GM12878 (cell line): ENCODE measurements at regions of chr11 and their contacts with region 1.

Region 1: GRCh38 chr11:94602430-94603372 is 35.5 kb downstream of the PIWIL4 start:
- DNase-seq: peak; percentile 75
- ATAC-seq: peak; percentile 94
- H3K4me3 ChIP-seq: no peak overlapping the region
- H3K27ac ChIP-seq: peak overlapping the region; percentile 44; the same call in 1 of the 2 replicates
- H3K4me1 ChIP-seq: peaks cover 7% of the 10 kb centered on the region; the same call in 1 of the 2 replicates
- H3K27me3 ChIP-seq: no peaks in the 10 kb centered on the region
- CTCF ChIP-seq: peak; percentile 58 to 66 (median 66)
- EP300 ChIP-seq: peak; percentile 80 to 95; a peak in 2 of 4 replicates
- POLR2A ChIP-seq: no peak
- RAD21 ChIP-seq: peak; percentile 65

Region 2: GRCh38 chr11:94271885-94272372 is 330.8 kb before region 1 on chr11:
- CTCF ChIA-PET with region 1: no interaction called
- POLR2A ChIA-PET with region 1: no interaction called
- RAD21 ChIA-PET with region 1: no interaction called
- SMC1A ChIA-PET with region 1: no interaction called
- in situ Hi-C with region 1: no loop called
- intact Hi-C with region 1: loop called (anchors 5 kb)
- DNase-seq: peak; percentile 24
- ATAC-seq: peak; percentile 90
- H3K4me3 ChIP-seq: no peak overlapping the region
- H3K27ac ChIP-seq: peak overlapping the region; percentile 55; the same call in 1 of the 2 replicates
- H3K4me1 ChIP-seq: peaks cover 6% of the 10 kb centered on the region; the same call in 1 of the 2 replicates
- H3K27me3 ChIP-seq: no peaks in the 10 kb centered on the region
- CTCF ChIP-seq: no peak
- EP300 ChIP-seq: peak; percentile 88 to 91; a peak in 3 of 4 replicates
- POLR2A ChIP-seq: no peak
- RAD21 ChIP-seq: peak; percentile 33; the same call in 1 of the 2 replicates

Region 3: GRCh38 chr11:94504689-94505293 is 97.9 kb before region 1 on chr11:
- CTCF ChIA-PET with region 1: interaction called, 32 read pairs
- POLR2A ChIA-PET with region 1: no interaction called
- RAD21 ChIA-PET with region 1: interaction called, 9 read pairs
- SMC1A ChIA-PET with region 1: interaction called, 17 read pairs
- in situ Hi-C with region 1: no loop called
- intact Hi-C with region 1: no loop called
- DNase-seq: no peak
- ATAC-seq: peak; percentile 84
- H3K4me3 ChIP-seq: no peak overlapping the region
- H3K27ac ChIP-seq: no peak overlapping the region
- H3K4me1 ChIP-seq: no peaks in the 10 kb centered on the region
- H3K27me3 ChIP-seq: no peaks in the 10 kb centered on the region
- CTCF ChIP-seq: peak; percentile 49 to 69 (median 55); a peak in 5 of 6 replicates
- EP300 ChIP-seq: no peak
- POLR2A ChIP-seq: no peak
- RAD21 ChIP-seq: peak; percentile 85

Region 4: GRCh38 chr11:94525546-94526324 is 77.0 kb before region 1 on chr11:
- CTCF ChIA-PET with region 1: interaction called, 337 read pairs
- POLR2A ChIA-PET with region 1: interaction called, 13 read pairs
- RAD21 ChIA-PET with region 1: interaction called, 121 read pairs
- SMC1A ChIA-PET with region 1: interaction called, 216 read pairs
- in situ Hi-C with region 1: loop called (anchors 5 kb)
- intact Hi-C with region 1: loop called (anchors 1 kb)
- DNase-seq: no peak
- ATAC-seq: no peak
- H3K4me3 ChIP-seq: no peak overlapping the region
- H3K27ac ChIP-seq: no peak overlapping the region
- H3K4me1 ChIP-seq: no peaks in the 10 kb centered on the region; the same call in 1 of the 2 replicates
- H3K27me3 ChIP-seq: no peaks in the 10 kb centered on the region
- CTCF ChIP-seq: no peak
- EP300 ChIP-seq: no peak
- POLR2A ChIP-seq: no peak
- RAD21 ChIP-seq: no peak

Region 5: DNA sequence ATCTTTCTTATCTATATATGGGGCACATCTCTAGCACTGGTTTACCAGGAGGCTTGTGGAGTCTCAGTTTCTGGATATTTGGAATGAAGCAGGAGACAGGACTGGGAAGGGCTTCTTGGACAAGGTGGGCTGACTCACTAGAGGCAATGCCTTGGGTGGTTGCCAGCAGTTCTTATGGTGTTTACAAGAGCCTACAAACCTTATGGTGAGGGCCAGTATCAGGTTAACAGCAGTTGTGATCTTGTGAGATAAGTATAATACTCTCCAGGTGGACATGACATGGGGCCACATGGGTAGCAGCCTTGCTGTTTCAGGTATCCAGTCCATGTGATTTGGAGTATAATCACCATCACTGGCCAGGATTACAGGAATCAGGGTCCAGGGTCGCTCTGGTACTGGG is 48.8 kb before region 1 on chr11:
- CTCF ChIA-PET with region 1: interaction called, 26 read pairs
- POLR2A ChIA-PET with region 1: interaction called, 5 read pairs
- RAD21 ChIA-PET with region 1: interaction called, 52 read pairs
- SMC1A ChIA-PET with region 1: interaction called, 53 read pairs
- in situ Hi-C with region 1: no loop called
- intact Hi-C with region 1: no loop called
- DNase-seq: no peak
- ATAC-seq: no peak
- H3K4me3 ChIP-seq: no peak overlapping the region
- H3K27ac ChIP-seq: no peak overlapping the region
- H3K4me1 ChIP-seq: no peaks in the 10 kb centered on the region; the same call in 1 of the 2 replicates
- H3K27me3 ChIP-seq: no peaks in the 10 kb centered on the region
- CTCF ChIP-seq: no peak
- EP300 ChIP-seq: no peak
- POLR2A ChIP-seq: no peak
- RAD21 ChIP-seq: no peak

Region 6: DNA sequence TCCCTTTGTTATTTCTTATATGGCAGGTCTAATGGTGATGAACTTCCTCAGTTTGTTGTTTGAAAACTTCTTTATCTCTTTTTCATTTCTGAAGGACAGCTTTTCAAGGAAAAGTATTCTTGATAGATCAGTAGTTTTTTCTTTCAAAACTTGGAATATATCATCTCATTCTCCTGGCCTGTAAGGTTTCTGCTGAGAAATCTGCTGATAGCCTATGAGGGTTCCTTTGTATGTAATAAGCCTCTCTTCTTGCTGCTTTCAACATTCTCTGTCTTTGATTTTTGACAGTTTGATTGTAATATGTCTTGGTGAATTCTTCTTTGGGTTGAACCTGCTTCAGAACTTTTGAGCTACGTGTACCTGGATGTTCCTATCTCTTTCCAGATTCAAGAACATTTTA is 10.4 kb after region 1 on chr11:
- CTCF ChIA-PET with region 1: interaction called, 36 read pairs
- POLR2A ChIA-PET with region 1: interaction called, 4 read pairs
- RAD21 ChIA-PET with region 1: interaction called, 6 read pairs
- SMC1A ChIA-PET with region 1: interaction called, 16 read pairs
- in situ Hi-C with region 1: no loop called
- intact Hi-C with region 1: no loop called
- DNase-seq: no peak
- ATAC-seq: no peak
- H3K4me3 ChIP-seq: no peak overlapping the region
- H3K27ac ChIP-seq: no peak overlapping the region
- H3K4me1 ChIP-seq: no peaks in the 10 kb centered on the region
- H3K27me3 ChIP-seq: no peaks in the 10 kb centered on the region
- CTCF ChIP-seq: no peak
- EP300 ChIP-seq: no peak
- POLR2A ChIP-seq: no peak
- RAD21 ChIP-seq: no peak